Endothelial cell of umbilical vein (primary cell): ENCODE measurements at regions of chr3 and their contacts with region 1.

Region 1: DNA sequence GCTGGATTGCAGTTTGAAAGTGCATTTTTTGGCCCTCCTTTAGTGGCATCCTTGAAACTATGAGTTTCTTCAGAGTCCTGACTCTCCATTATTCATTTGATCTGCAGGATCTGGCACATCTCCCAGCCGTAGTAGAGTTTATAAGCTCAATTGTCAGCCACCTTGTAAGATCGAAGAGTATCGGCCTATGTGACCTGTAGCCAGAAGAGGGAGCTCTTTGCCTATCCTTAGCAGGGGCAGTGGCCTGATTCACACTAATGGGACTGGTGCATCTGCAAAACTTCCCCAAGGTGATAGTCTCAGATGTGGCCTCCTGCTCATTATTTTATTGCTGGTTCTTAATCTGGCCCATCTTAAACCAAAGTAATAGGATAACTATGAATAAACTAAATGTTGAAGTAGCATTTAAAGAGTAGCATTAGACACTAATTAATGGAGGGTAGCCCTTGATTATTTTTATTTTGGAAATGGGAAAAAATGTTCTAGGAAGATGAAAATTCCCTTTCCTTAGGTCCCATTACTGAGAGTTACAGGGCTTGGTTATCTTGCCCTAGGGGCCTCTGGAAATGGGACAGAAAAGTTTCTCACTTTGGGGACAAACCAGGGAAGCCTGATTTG is 21.2 kb downstream of the GCSAM start:
- DNase-seq: peak; percentile 59
- H3K4me3 ChIP-seq: no peak overlapping the region
- H3K27ac ChIP-seq: no peak overlapping the region
- H3K4me1 ChIP-seq: peaks cover 7% of the 10 kb centered on the region
- H3K27me3 ChIP-seq: no peaks in the 10 kb centered on the region
- CTCF ChIP-seq: peak; percentile 70 to 79
- POLR2A ChIP-seq: no peak

Region 2: GRCh38 chr3:112086076-112086854 is 25.6 kb before region 1 on chr3 and contains the start of gene C3orf52:
- CTCF ChIA-PET with region 1: interaction called, 13 read pairs
- POLR2A ChIA-PET with region 1: no interaction called
- dilution Hi-C with region 1: no loop called
- intact Hi-C with region 1: no loop called
- DNase-seq: peak; percentile 83
- H3K4me3 ChIP-seq: peak within 1 kb of the TSS; percentile 1 to 70 (median 46)
- H3K27ac ChIP-seq: peak within 1 kb of the TSS; percentile 1
- H3K4me1 ChIP-seq: peaks cover 16% of the 10 kb centered on the region
- H3K27me3 ChIP-seq: no peaks in the 10 kb centered on the region
- CTCF ChIP-seq: no peak
- POLR2A ChIP-seq: peak; percentile 53
- total RNA-seq, gene C3orf52: 2.1 and 4.6 TPM in 2 replicates

Region 3: DNA sequence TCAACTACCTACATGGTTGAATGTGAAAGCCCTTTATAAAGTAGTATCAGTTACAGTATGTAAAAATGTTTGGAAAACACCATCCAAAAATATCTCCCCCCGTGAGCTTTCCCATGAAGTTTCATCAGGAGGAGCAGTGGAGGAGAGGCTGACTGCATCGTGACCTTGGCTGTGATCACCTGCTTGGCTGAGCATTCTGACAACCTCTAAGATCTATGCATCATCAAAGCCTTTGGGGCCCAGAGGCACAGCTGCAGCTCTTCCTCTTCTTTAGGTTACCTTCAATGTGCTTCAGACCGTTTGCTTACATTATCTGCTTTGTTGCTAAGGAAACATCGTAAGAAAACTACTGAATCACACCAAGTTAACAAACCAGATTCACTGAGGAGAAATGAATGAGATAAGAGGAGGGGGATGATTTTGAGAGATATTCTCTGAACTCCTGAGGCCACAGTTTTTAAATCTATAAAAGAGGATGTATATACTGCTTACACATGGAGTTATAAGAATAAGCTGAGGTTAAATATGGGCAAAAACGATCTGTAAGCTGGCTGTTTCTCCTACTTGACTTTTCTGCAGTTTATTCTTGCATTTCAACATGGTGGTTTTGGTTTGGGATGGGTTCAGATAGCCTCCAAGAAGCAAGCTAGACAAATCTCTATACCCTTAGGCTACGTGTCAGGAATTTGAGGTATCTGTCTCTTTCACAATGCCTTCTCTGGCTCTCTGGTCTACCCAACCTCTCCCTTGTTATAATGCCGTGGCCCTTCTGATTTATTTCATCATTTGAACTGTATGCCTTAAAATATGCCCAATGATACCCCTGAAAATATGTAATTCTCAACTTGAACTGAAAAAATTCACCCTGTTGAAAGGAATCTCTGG is 17.2 kb after region 1 on chr3:
- CTCF ChIA-PET with region 1: interaction called, 26 read pairs
- POLR2A ChIA-PET with region 1: no interaction called
- dilution Hi-C with region 1: no loop called
- intact Hi-C with region 1: no loop called
- DNase-seq: no peak
- H3K4me3 ChIP-seq: no peak overlapping the region
- H3K27ac ChIP-seq: no peak overlapping the region
- H3K4me1 ChIP-seq: no peaks in the 10 kb centered on the region
- H3K27me3 ChIP-seq: no peaks in the 10 kb centered on the region
- CTCF ChIP-seq: no peak
- POLR2A ChIP-seq: no peak

Region 4: GRCh38 chr3:112303764-112304325 is 192.0 kb after region 1 on chr3:
- CTCF ChIA-PET with region 1: interaction called, 10 read pairs
- POLR2A ChIA-PET with region 1: no interaction called
- dilution Hi-C with region 1: no loop called
- intact Hi-C with region 1: no loop called
- DNase-seq: peak; percentile 53
- H3K4me3 ChIP-seq: peak overlapping the region; percentile 11 to 53 (median 43)
- H3K27ac ChIP-seq: no peak overlapping the region
- H3K4me1 ChIP-seq: peaks cover 8% of the 10 kb centered on the region
- H3K27me3 ChIP-seq: no peaks in the 10 kb centered on the region
- CTCF ChIP-seq: no peak
- POLR2A ChIP-seq: no peak

Region 5: GRCh38 chr3:112327371-112327951 is 215.6 kb after region 1 on chr3:
- CTCF ChIA-PET with region 1: interaction called, 13 read pairs
- POLR2A ChIA-PET with region 1: no interaction called
- dilution Hi-C with region 1: no loop called
- intact Hi-C with region 1: loop called (anchors 10 kb)
- DNase-seq: peak; percentile 79
- H3K4me3 ChIP-seq: no peak overlapping the region
- H3K27ac ChIP-seq: no peak overlapping the region
- H3K4me1 ChIP-seq: no peaks in the 10 kb centered on the region
- H3K27me3 ChIP-seq: peaks cover 0 to 2% of the 10 kb centered on the region in 2 experiments
- CTCF ChIP-seq: peak; percentile 34 to 53
- POLR2A ChIP-seq: no peak

Region 6: DNA sequence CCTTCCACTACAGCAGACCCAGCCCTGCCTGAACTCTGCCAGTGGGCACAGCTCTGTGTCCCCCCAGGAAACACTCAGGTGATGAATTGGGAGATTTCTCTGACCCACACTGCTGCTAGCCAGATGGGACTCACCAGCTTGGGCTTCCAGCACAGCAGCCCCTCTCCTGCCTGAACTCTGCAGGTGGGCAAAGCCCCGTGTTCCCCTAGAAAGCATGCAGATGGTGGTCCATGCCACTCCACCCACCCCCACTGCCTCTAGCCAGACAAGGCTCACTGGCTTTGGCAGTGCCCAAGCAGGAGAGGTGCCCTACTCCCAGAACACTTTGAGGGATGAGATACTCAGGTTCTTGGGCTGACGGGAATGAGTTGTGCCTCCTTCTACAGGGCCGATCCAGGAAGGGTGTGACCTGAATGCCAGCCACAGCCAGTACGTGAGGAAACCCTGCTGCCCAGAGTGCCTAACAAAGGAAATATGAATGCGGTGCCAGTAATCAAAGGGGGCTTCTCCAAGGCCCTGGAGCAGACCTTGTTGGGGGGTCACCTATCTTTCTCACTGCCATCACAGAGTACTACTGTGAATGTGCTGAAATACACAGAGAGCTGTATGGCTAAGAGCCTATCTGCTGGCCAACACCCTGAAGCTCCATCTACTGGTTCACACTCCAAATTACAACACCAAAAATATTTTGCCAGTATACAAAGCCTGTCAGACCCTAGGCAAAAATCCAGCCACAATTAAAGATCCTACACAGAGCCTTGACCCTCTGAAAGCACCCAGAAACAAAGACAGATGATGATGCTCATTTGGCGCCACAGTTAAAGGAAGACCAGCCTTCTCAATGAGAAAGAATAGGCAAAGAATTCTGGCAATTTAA is 325.5 kb after region 1 on chr3:
- CTCF ChIA-PET with region 1: interaction called, 12 read pairs
- POLR2A ChIA-PET with region 1: no interaction called
- dilution Hi-C with region 1: no loop called
- intact Hi-C with region 1: loop called (anchors 10 kb)
- DNase-seq: peak; percentile 33
- H3K4me3 ChIP-seq: no peak overlapping the region
- H3K27ac ChIP-seq: no peak overlapping the region
- H3K4me1 ChIP-seq: no peaks in the 10 kb centered on the region
- H3K27me3 ChIP-seq: no peaks in the 10 kb centered on the region
- CTCF ChIP-seq: peak; percentile 36 to 41
- POLR2A ChIP-seq: no peak

Region 7: GRCh38 chr3:112531358-112531781 is 419.5 kb after region 1 on chr3:
- CTCF ChIA-PET with region 1: interaction called, 18 read pairs
- POLR2A ChIA-PET with region 1: no interaction called
- dilution Hi-C with region 1: no loop called
- intact Hi-C with region 1: loop called (anchors 5 kb)
- DNase-seq: peak; percentile 53
- H3K4me3 ChIP-seq: no peak overlapping the region
- H3K27ac ChIP-seq: no peak overlapping the region
- H3K4me1 ChIP-seq: no peaks in the 10 kb centered on the region
- H3K27me3 ChIP-seq: no peaks in the 10 kb centered on the region
- CTCF ChIP-seq: no peak
- POLR2A ChIP-seq: no peak